Activated CD4-positive, alpha-beta T cell treated with anti-CD3 and anti-CD28 coated beads for 36 hours (primary cell): ENCODE measurements at regions of chr19 and their contacts with region 1.

Region 1: DNA sequence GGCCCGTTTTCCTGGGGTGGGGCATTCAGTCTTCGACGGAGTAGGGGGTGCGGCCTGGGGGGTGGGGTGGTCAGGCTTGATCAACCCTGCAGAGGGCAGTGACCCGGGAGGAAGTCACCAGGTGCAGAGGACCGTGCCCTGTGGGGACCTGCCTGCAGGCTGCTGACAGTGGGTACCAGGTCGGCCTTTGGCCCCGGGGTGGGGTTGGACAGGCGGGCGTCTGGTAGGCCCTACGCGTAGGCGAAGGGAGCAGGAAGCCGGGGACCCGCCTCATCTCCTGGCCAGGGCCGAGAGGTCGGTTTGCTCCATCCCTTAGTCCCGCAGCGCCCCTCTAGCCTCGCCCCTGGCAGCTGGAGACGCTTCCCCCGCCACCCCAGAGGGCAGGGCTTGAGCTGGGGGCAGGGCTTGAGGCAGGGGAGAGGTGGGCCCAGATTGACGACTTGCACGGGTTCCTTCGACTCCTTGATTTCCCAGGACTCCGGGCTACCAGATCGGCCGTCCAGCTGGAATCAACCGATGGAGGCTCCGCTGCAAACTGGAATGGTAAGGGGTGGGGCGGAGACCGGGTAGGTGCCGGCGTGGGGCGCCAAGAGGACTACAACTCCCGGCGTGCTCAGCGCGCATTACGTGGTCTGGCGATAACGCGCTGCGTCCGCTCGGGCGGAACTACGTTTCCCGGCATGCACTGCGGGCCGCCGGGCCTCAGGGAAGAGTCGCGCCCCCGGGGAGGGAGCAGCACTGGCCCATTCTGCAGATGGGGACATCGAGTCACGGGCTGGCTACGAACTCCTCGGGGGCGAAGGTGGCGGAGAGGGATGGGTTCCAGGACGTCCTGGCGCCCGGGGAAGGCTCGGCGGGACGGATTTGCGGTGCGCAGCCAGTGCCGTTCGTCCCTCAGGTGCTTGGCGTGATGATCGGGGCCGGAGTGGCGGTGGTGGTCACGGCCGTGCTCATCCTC is at the start of gene PNPLA6:
- DNase-seq: peak; percentile 97
- ATAC-seq: peak; percentile 80
- H3K4me3 Mint-ChIP-seq: peak within 1 kb of the TSS; percentile 91
- H3K27ac Mint-ChIP-seq: peak within 1 kb of the TSS; percentile 84
- H3K4me1 Mint-ChIP-seq: peaks cover 20% of the 10 kb centered on the region
- H3K27me3 Mint-ChIP-seq: no peaks in the 10 kb centered on the region
- total RNA-seq, gene PNPLA6: 82.2 to 108 TPM

Region 2: GRCh38 chr19:7197760-7198696 is 337.3 kb before region 1 on chr19:
- CTCF ChIA-PET with region 1: no interaction called
- POLR2A ChIA-PET with region 1: no interaction called
- intact Hi-C with region 1: loop called in 1 of 2 experiments (anchors 2 kb)
- DNase-seq: peak; percentile 95
- ATAC-seq: peak; percentile 84
- H3K4me3 Mint-ChIP-seq: peak overlapping the region; percentile 77
- H3K27ac Mint-ChIP-seq: peak overlapping the region; percentile 88
- H3K4me1 Mint-ChIP-seq: peaks cover 16% of the 10 kb centered on the region
- H3K27me3 Mint-ChIP-seq: peaks cover 21% of the 10 kb centered on the region

Region 3: DNA sequence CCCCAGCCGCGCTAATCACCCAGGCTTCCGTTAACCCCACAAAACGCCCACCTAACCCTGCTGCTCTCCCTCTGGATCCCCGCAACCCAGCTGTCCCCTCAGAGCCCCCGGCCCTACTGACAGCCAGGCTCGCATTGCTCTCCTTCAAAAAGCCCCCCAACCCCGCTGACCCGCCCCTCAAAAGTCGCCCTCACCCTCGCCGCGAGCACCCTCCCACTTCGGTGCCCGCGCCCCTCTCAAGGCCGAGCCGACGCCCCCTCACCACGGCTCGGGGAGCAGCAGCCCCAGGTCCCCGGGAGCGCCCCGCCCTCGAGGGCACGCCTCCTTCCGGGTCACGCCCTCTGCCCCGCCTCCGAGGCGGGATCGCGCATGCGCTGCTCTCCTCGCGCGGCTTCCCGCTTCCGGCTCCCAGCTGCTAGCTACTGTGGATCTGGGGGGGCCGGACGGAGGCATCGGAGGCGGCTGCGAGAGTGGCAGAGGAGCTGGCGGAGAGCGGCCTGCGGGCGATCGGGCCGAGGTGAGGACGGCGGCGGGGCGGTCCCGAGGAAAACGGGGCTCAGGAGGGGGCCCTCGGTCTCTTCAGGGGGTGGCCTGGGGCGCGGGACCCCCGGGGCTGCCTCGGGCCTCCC is 140.5 kb before region 1 on chr19:
- CTCF ChIA-PET with region 1: no interaction called
- POLR2A ChIA-PET with region 1: interaction called, 4 read pairs
- intact Hi-C with region 1: loop called in 1 of 2 experiments (anchors 1 kb)
- DNase-seq: peak; percentile 94
- ATAC-seq: peak; percentile 86
- H3K4me3 Mint-ChIP-seq: peak overlapping the region; percentile 83
- H3K27ac Mint-ChIP-seq: peak overlapping the region; percentile 78
- H3K4me1 Mint-ChIP-seq: peaks cover 36% of the 10 kb centered on the region
- H3K27me3 Mint-ChIP-seq: no peaks in the 10 kb centered on the region

Region 4: GRCh38 chr19:7506385-7507328 is 28.7 kb before region 1 on chr19:
- CTCF ChIA-PET with region 1: no interaction called
- POLR2A ChIA-PET with region 1: no interaction called
- intact Hi-C with region 1: loop called in 1 of 2 experiments (anchors 1 kb)
- DNase-seq: peak; percentile 81
- ATAC-seq: peak; percentile 85
- H3K4me3 Mint-ChIP-seq: no peak overlapping the region
- H3K27ac Mint-ChIP-seq: no peak overlapping the region
- H3K4me1 Mint-ChIP-seq: peaks cover 13% of the 10 kb centered on the region
- H3K27me3 Mint-ChIP-seq: peaks cover 28% of the 10 kb centered on the region

Region 5: GRCh38 chr19:7550987-7551761 is 15.9 kb after region 1 on chr19:
- CTCF ChIA-PET with region 1: no interaction called
- POLR2A ChIA-PET with region 1: interaction called, 3 read pairs
- intact Hi-C with region 1: loop called (anchors 1 to 2 kb)
- DNase-seq: peak; percentile 77
- ATAC-seq: peak; percentile 87
- H3K4me3 Mint-ChIP-seq: no peak overlapping the region
- H3K27ac Mint-ChIP-seq: peak overlapping the region; percentile 58
- H3K4me1 Mint-ChIP-seq: peaks cover 11% of the 10 kb centered on the region
- H3K27me3 Mint-ChIP-seq: no peaks in the 10 kb centered on the region

Region 6: GRCh38 chr19:7611541-7612279 is 76.4 kb after region 1 on chr19:
- CTCF ChIA-PET with region 1: no interaction called
- POLR2A ChIA-PET with region 1: no interaction called
- intact Hi-C with region 1: no loop called
- DNase-seq: no peak
- ATAC-seq: no peak
- H3K4me3 Mint-ChIP-seq: no peak overlapping the region
- H3K27ac Mint-ChIP-seq: no peak overlapping the region
- H3K4me1 Mint-ChIP-seq: no peaks in the 10 kb centered on the region
- H3K27me3 Mint-ChIP-seq: no peaks in the 10 kb centered on the region

Region 7: DNA sequence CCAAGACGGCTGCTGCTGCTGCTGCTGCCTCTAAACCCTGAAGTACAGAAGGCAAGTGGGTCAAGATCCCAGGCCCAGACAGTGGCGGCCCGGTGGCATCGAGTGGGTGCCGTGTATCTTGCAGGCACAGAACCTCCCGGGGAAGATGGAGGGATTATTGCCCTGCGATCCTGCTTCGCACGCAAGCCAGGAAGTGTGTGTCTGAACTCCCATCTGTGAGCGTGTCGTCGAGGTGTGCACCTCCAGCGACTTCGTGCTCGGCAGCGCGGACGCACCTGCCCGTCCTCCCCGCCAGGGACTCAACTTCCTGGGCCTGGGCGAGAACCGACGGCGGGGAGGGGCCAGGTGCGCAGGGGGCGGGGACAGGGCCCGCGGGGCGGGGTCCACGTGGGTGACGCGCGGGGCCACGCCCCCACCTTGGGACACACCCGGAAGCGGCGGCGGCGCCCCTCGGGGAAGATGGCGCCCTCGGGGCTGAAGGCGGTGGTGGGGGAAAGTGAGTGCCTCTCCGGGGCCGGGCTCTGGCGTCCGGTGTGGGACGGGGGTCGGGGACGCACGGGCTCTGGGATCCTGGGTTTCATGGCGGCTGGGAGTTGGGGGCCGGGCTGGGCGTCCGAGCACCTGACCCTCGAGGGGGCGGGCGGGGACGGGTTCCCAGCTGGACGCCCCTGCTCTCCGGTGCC is 101.5 kb after region 1 on chr19 and contains the start of gene STXBP2:
- CTCF ChIA-PET with region 1: no interaction called
- POLR2A ChIA-PET with region 1: no interaction called
- intact Hi-C with region 1: loop called in 1 of 2 experiments (anchors 1 kb)
- DNase-seq: peak; percentile 96
- ATAC-seq: peak; percentile 97
- H3K4me3 Mint-ChIP-seq: peak within 1 kb of the TSS; percentile 78
- H3K27ac Mint-ChIP-seq: peak within 1 kb of the TSS; percentile 86
- H3K4me1 Mint-ChIP-seq: peaks cover 22% of the 10 kb centered on the region
- H3K27me3 Mint-ChIP-seq: no peaks in the 10 kb centered on the region
- total RNA-seq, gene STXBP2: 75.2 to 83.0 TPM

Region 8: DNA sequence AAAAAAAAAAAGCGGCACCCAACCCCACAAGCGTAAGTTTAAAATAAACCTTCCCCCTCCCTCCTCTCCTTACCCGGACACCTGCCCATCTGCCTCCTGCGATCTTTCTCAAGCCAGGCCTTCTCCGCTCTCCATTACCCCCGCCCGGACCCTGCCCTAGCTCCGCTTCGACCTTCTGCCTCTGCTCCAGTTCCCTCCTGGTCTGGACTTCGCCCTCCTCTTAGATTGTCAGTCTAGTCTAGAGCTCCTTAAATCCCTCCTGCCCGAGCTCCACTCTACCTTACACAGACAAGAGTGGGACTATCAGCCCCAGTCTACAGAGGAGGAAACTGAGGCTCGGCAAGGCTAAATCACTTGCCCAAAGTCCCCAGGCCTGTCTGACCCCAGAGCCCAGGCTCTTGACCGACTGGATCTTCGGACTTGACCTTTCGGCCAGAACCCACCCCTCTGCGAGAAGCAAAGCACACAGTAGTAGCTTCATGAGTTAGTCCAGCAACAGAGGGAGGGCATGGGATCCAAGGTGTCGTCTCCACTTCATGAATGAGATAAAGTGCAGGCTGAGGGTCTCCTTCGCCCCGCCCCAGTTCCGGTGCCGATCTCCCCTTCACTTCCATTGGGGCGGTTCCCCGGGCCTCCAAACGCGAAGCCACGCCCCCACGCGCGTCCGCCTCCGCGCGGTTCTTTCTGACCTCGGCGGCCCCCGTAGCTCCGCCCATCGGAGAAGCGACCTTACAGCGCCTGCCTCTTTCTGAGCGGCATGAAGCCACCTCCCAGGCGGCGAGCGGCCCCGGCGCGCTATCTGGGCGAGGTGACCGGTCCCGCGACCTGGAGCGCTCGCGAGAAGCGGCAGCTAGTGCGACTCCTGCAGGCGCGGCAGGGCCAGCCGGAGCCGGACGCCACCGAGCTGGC is 384.6 kb after region 1 on chr19 and contains the start of gene SNAPC2:
- CTCF ChIA-PET with region 1: no interaction called
- POLR2A ChIA-PET with region 1: no interaction called
- intact Hi-C with region 1: loop called in 1 of 2 experiments (anchors 1 kb)
- DNase-seq: peak; percentile 98
- ATAC-seq: peak; percentile 76
- H3K4me3 Mint-ChIP-seq: peak within 1 kb of the TSS; percentile 82
- H3K27ac Mint-ChIP-seq: peak within 1 kb of the TSS; percentile 87
- H3K4me1 Mint-ChIP-seq: peaks cover 32% of the 10 kb centered on the region
- H3K27me3 Mint-ChIP-seq: peaks cover 20% of the 10 kb centered on the region
- total RNA-seq, gene SNAPC2: 14.6 to 16.2 TPM

Region 9: GRCh38 chr19:8050274-8051096 is 515.2 kb after region 1 on chr19:
- CTCF ChIA-PET with region 1: no interaction called
- POLR2A ChIA-PET with region 1: no interaction called
- intact Hi-C with region 1: no loop called
- DNase-seq: peak; percentile 98
- ATAC-seq: peak; percentile 99
- H3K4me3 Mint-ChIP-seq: peak overlapping the region; percentile 36
- H3K27ac Mint-ChIP-seq: no peak overlapping the region
- H3K4me1 Mint-ChIP-seq: peaks cover 11% of the 10 kb centered on the region
- H3K27me3 Mint-ChIP-seq: peaks cover 4% of the 10 kb centered on the region